Motor neuron (in vitro differentiated cells): ENCODE measurements at regions of chr9 and their contacts with region 1.

Region 1: DNA sequence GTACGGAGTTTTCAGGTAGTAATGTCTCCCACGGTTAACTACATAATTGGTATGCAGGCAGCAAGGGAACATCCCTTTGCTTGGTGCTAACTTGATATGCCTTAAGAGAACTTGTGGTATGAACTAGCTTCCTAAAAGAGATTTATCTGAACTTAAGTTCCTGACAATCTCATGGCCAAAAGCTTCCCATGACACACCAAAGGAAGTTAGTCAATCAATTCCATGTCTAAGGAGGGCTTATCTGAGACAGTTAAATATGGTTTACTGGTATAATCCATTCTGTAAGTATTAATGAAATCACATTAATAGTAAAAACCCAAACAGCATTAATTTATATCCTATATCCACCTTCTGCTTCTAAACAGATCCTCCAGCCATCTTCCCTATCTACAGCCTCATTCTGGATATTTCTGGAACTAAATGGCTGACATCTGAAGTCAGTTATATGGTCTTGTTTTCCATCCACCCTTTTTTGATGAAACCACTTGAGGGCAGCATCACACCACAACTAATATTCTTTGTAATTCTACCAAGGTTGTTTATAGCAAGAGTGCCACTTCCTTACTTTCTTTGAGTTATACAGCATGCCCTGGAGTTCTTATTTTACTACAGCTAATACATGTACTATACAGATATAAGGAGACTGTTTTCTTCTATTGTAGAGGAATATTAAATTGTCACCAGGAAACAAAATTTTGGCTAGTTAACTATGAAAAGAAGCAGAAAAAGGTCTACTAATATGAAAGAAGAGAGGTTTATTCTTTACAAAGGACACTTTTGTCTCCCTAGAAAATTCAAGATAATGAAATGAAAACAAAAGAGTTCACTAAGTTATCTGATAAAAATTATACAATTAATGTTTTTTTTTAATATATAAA is 34.7 kb downstream of the SHOC1 start:
- ATAC-seq: peak in 6 of 8 experiments; percentile 29 to 97 (median 80)
- H3K4me3 ChIP-seq: no peak overlapping the region
- H3K27ac ChIP-seq: no peak overlapping the region
- H3K4me1 ChIP-seq: no peaks in the 10 kb centered on the region

Region 2: GRCh38 chr9:110869931-110870330 is 890.1 kb before region 1 on chr9:
- in situ Hi-C with region 1: no loop called
- ATAC-seq: no peak
- H3K4me3 ChIP-seq: no peak overlapping the region
- H3K27ac ChIP-seq: no peak overlapping the region
- H3K4me1 ChIP-seq: peaks cover 0 to 4% of the 10 kb centered on the region in 2 donors

Region 3: DNA sequence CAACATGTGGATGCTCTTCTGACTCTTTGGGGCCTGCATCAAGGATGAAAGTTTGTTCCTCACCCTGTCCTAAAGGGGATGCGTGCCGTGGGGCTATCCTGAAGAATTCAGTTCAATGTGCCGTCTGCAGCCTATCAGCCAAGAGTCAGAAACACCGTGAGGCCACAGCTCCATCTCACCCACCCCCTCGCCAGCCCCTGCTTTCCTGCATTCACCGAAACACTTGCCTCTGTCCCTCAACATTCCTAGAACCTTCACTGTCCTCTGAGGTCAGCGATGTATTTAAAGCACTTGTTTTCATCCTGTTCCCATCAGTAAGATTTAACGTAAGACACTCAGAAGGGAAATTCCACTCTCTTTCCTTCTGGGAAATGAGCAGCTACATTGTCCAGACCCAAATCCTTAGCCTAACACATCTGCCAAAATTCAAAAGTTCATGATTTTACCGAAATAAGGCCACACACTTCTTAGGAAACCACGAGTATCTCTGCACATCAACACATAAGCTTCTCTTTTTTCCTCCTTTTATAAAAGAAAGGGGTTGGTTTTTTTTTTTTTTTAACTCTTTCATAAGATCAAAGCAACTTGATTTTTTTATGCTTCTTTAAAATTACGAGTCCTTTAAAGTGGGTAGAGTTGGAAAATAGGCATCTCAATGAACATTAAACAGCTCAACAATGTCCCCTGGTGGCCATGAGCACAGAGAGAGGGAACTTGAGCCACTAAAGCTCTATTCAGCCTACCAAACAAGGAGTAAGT is 314.4 kb after region 1 on chr9:
- in situ Hi-C with region 1: loop called in 5 of 9 experiments (anchors 5 to 25 kb)
- ATAC-seq: peak in 6 of 8 experiments; percentile 57 to 91 (median 80)
- H3K4me3 ChIP-seq: no peak overlapping the region
- H3K27ac ChIP-seq: no peak overlapping the region
- H3K4me1 ChIP-seq: no peaks in the 10 kb centered on the region

Region 4: DNA sequence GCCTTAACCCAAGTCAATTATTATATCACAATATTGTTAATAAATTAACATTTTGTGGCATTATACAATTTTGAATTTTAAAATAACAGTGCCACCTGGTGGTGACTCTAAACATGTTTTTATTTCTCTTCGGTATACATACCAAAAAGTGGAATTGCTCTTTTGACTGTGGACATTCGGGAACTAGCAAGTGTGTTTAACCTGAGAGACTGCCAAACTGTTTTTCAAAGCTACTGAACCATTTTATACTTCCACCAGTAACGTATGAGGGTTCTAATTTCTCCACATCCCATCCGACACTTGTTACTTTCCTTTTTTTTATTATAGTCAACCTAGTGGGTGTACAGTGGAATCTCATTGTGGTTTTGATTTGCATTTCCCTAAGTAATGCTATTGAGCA is 601.6 kb after region 1 on chr9:
- in situ Hi-C with region 1: loop called in 3 of 9 experiments (anchors 25 kb)
- ATAC-seq: peak in 3 of 8 experiments; percentile 39 to 61 (median 47)
- H3K4me3 ChIP-seq: no peak overlapping the region
- H3K27ac ChIP-seq: no peak overlapping the region
- H3K4me1 ChIP-seq: no peaks in the 10 kb centered on the region